Right ventricle myocardium inferior (tissue), 1 donor: ENCODE measurements at regions of chr12 and their contacts with region 1.

Region 1: GRCh38 chr12:70242695-70243509 is at the start of gene CNOT2:
- DNase-seq: peak; percentile 92
- ATAC-seq: peak; percentile 97
- total RNA-seq, gene CNOT2: 36.5 TPM

Region 2: GRCh38 chr12:70365648-70366518 is 123.0 kb after region 1 on chr12 and contains the start of gene KCNMB4:
- intact Hi-C with region 1: loop called (anchors 10 kb)
- DNase-seq: peak; percentile 86
- ATAC-seq: peak; percentile 88
- total RNA-seq, gene KCNMB4: 1.6 TPM